ENCODE measurements at regions of chr1 and their contacts with region 1.

Region 1: DNA sequence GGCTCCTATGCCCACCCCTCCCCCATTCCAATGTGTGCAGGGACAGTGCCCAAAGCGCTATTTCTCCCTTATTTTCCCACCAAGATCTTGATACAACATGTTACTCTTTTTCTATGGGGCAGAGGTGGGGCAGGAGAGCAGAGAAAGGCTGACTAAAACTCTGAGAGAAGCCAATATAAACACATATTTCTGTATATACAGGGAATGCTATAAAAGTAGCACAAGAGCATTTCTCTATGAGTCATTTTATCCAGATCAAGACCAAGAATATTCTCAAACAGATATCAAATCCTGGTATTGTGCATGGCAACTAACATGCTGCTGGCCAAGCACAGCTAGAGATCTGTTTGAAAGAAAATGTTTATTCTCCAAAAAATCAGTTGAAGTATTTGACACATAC is 7.3 kb downstream of the WDR26 start:
- DNase-seq: peak; percentile 88
- ATAC-seq: peak; percentile 77
- H3K4me3 ChIP-seq: no peak overlapping the region
- H3K27ac ChIP-seq: no peak overlapping the region; the same call in 1 of the 2 replicates
- H3K4me1 ChIP-seq: peaks cover 5% of the 10 kb centered on the region
- H3K27me3 ChIP-seq: no peaks in the 10 kb centered on the region
- CTCF ChIP-seq: no peak
- POLR2A ChIP-seq: no peak
- RAD21 ChIP-seq: no peak

Region 2: GRCh38 chr1:222792744-222793143 is 1634.6 kb before region 1 on chr1:
- CTCF ChIA-PET with region 1: no interaction called
- POLR2A ChIA-PET with region 1: no interaction called
- dilution Hi-C with region 1: no loop called
- in situ Hi-C with region 1: no loop called
- intact Hi-C with region 1: no loop called
- DNase-seq: peak; percentile 38
- ATAC-seq: no peak
- H3K4me3 ChIP-seq: no peak overlapping the region
- H3K27ac ChIP-seq: no peak overlapping the region
- H3K4me1 ChIP-seq: no peaks in the 10 kb centered on the region
- H3K27me3 ChIP-seq: peaks cover 6% of the 10 kb centered on the region; the same call in 1 of the 2 replicates
- CTCF ChIP-seq: peak; percentile 79
- POLR2A ChIP-seq: no peak
- RAD21 ChIP-seq: peak; percentile 90

Region 3: GRCh38 chr1:224392411-224393249 is 34.7 kb before region 1 on chr1:
- CTCF ChIA-PET with region 1: no interaction called
- POLR2A ChIA-PET with region 1: no interaction called
- dilution Hi-C with region 1: no loop called
- in situ Hi-C with region 1: no loop called
- intact Hi-C with region 1: loop called (anchors 5 kb)
- DNase-seq: peak; percentile 70
- ATAC-seq: peak; percentile 87
- H3K4me3 ChIP-seq: no peak overlapping the region
- H3K27ac ChIP-seq: peak overlapping the region; percentile 5; the same call in 1 of the 2 replicates
- H3K4me1 ChIP-seq: no peaks in the 10 kb centered on the region
- H3K27me3 ChIP-seq: no peaks in the 10 kb centered on the region
- CTCF ChIP-seq: no peak
- POLR2A ChIP-seq: no peak
- RAD21 ChIP-seq: no peak

Region 4: GRCh38 chr1:224406216-224406615 is 21.1 kb before region 1 on chr1:
- CTCF ChIA-PET with region 1: no interaction called
- POLR2A ChIA-PET with region 1: no interaction called
- dilution Hi-C with region 1: no loop called
- in situ Hi-C with region 1: no loop called
- intact Hi-C with region 1: no loop called
- DNase-seq: no peak
- ATAC-seq: no peak; the same call in 1 of the 2 replicates
- H3K4me3 ChIP-seq: no peak overlapping the region
- H3K27ac ChIP-seq: no peak overlapping the region
- H3K4me1 ChIP-seq: peaks cover 5% of the 10 kb centered on the region; the same call in 1 of the 2 replicates
- H3K27me3 ChIP-seq: no peaks in the 10 kb centered on the region
- CTCF ChIP-seq: no peak
- POLR2A ChIP-seq: no peak
- RAD21 ChIP-seq: no peak